Right ventricle myocardium inferior (tissue), 1 donor: ENCODE measurements at regions of chr10 and their contacts with region 1.

Region 1: GRCh38 chr10:11036407-11037011 is 18.8 kb downstream of the CELF2 start:
- DNase-seq: no peak
- ATAC-seq: peak; percentile 40

Region 2: GRCh38 chr10:10233229-10233628 is 803.3 kb before region 1 on chr10:
- intact Hi-C with region 1: loop called (anchors 10 kb)
- DNase-seq: no peak
- ATAC-seq: no peak

Region 3: GRCh38 chr10:10824591-10825148 is 211.8 kb before region 1 on chr10:
- intact Hi-C with region 1: loop called (anchors 5 kb)
- DNase-seq: peak; percentile 76
- ATAC-seq: peak; percentile 86

Region 4: DNA sequence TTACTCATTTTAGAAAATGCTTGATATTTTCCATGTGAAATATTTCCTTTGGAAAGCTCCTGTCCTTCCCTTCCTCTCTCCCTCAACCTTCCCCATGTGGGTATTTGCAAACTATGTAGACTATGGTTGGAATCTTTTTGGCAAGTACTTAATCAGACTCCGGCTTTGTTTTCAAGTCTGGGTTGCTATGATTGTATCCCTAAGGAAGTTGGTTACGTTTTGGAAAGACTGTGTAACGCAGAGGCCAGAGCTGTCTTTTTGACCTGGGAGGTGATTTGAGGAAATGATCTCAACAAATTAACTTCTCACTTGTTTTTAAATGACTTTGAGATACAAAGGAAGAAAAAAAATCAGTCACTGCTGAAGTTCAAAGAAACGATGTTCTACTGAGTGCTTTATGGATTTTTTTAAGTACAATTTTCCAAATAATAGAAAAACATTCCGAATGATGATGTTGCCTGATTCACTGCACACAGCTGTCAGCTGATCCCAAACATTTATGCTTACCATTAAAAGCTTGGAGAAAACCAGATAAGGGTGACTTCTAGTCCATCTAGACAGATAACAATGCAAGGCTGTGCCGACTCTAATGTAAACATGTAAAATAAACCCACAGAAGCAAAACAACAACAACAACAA is 164.4 kb before region 1 on chr10:
- intact Hi-C with region 1: loop called (anchors 5 kb)
- DNase-seq: no peak
- ATAC-seq: peak; percentile 95

Region 5: GRCh38 chr10:10977978-10978377 is 58.5 kb before region 1 on chr10:
- intact Hi-C with region 1: no loop called
- DNase-seq: no peak
- ATAC-seq: no peak

Region 6: DNA sequence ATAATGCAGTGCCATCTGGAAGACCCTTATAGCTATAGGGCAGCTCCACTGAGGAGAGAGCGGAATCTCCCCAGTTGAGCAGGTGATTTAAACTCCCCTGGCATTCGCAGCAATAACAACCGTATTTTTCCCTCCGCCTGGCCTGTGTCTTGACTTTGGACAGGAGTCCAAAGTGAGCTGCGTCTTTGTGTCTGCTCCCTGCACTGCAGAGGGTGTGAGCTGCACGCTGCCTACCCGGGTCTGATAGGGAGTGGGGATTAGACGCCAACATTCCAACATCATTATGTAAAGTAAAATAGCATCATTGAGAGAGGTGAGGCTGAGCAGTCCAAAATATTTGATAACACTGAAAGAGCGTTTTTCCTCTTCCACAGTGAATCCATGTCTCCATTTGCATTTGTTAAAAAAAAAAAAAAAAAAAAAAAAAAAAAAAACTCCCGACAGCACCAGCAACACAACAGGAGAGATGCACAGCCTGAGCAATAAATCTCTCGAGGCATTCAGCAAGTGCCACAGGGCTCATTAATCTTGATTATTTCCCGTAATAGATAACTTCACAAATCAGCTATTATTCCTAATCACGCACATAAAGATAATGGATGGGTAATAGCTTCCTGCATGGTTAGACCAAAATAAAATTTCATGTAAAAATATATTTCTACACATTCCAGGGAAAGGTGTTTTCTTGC is 49.8 kb after region 1 on chr10:
- intact Hi-C with region 1: loop called (anchors 5 kb)
- DNase-seq: peak; percentile 78
- ATAC-seq: peak; percentile 85

Region 7: DNA sequence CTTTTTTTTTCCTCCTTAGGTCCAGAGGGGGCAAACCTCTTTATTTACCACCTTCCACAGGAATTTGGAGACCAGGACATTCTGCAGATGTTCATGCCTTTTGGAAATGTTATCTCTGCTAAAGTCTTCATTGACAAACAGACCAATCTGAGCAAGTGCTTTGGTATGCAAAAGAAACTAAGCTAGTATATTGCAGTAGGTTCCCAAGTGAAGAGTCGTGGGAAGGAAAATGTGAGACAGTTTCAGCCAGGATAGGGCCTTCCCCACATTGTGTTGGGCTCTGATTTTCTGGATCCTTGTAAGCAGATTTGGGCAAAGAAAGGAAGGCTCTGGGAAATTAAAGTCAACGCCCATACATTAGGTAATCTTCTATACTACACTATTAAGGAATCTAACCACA is 289.3 kb after region 1 on chr10:
- intact Hi-C with region 1: no loop called
- DNase-seq: no peak
- ATAC-seq: no peak